K562 (cell line): ENCODE measurements at regions of chr7 and their contacts with region 1.

Region 1: GRCh38 chr7:100049441-100050311 is at the start of gene ZSCAN21:
- DNase-seq: peak; percentile 93 to 97 (median 96)
- ATAC-seq: peak; percentile 96
- H3K4me3 ChIP-seq: peak within 1 kb of the TSS; percentile 88
- H3K27ac ChIP-seq: peak within 1 kb of the TSS; percentile 77
- H3K4me1 ChIP-seq: peaks cover 3 to 14% of the 10 kb centered on the region in 2 experiments; a peak in 3 of 5 replicates
- H3K27me3 ChIP-seq: no peaks in the 10 kb centered on the region
- CTCF ChIP-seq: peak; percentile 28 to 41 (median 34); a peak in 5 of 6 replicates
- EP300 ChIP-seq: peak; percentile 46
- POLR2A ChIP-seq: peak; percentile 95
- RAD21 ChIP-seq: peak in 1 of 2 experiments; percentile 29; a peak in 1 of 4 replicates
- polyA plus RNA-seq, gene ZSCAN21: 5.9 to 6.9 TPM

Region 2: GRCh38 chr7:99910976-99911375 is 138.7 kb before region 1 on chr7:
- CTCF ChIA-PET with region 1: interaction called, 6 read pairs
- POLR2A ChIA-PET with region 1: interaction called, 3 read pairs
- in situ Hi-C with region 1: no loop called
- intact Hi-C with region 1: loop called (anchors 5 kb)
- DNase-seq: no peak
- ATAC-seq: no peak
- H3K4me3 ChIP-seq: no peak overlapping the region
- H3K27ac ChIP-seq: no peak overlapping the region
- H3K4me1 ChIP-seq: no peaks in the 10 kb centered on the region
- H3K27me3 ChIP-seq: no peaks in the 10 kb centered on the region
- CTCF ChIP-seq: no peak
- EP300 ChIP-seq: no peak
- POLR2A ChIP-seq: no peak
- RAD21 ChIP-seq: no peak

Region 3: DNA sequence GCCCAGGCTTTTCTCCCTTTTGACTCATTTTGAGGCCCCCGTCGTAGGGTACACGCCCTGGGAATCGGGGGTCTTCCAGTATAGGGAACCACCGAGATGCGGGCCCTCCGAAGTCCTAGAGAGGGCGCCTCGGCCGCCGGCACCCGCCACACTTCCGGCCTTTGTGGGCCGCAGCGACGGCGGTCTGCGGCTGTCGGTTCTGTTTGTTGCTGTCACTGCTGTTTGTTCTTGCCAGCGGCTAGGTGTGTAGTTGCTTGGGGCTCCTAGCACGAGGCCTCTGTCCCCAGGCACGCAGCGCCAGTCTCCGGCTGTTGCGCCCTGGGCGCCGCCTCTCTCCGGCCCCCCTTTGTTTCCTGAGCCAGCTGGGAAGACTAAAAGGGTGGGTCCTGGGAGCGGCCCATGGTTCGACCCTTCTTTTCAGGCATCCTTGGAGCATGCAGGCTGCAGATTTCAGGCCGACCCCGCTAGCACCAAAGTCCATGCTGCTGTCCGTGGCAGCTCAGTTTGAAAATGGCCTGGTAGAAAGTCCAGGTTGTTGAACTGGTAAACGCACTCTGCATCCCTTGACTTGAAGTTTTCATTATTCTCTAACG is 52.0 kb before region 1 on chr7:
- CTCF ChIA-PET with region 1: interaction called, 13 read pairs
- POLR2A ChIA-PET with region 1: no interaction called
- in situ Hi-C with region 1: no loop called
- intact Hi-C with region 1: loop called (anchors 2 kb)
- DNase-seq: no peak
- ATAC-seq: no peak
- H3K4me3 ChIP-seq: no peak overlapping the region
- H3K27ac ChIP-seq: no peak overlapping the region
- H3K4me1 ChIP-seq: peaks cover 2 to 13% of the 10 kb centered on the region in 2 experiments; a peak in 3 of 5 replicates
- H3K27me3 ChIP-seq: peaks cover 25 to 40% of the 10 kb centered on the region in 2 experiments; a peak in 4 of 5 replicates
- CTCF ChIP-seq: no peak
- EP300 ChIP-seq: no peak
- POLR2A ChIP-seq: no peak
- RAD21 ChIP-seq: no peak

Region 4: GRCh38 chr7:100008525-100008924 is 41.2 kb before region 1 on chr7:
- CTCF ChIA-PET with region 1: no interaction called
- POLR2A ChIA-PET with region 1: no interaction called
- in situ Hi-C with region 1: no loop called
- intact Hi-C with region 1: no loop called
- DNase-seq: no peak
- ATAC-seq: no peak
- H3K4me3 ChIP-seq: no peak overlapping the region
- H3K27ac ChIP-seq: no peak overlapping the region
- H3K4me1 ChIP-seq: peaks cover 5 to 7% of the 10 kb centered on the region in 2 experiments; a peak in 4 of 5 replicates
- H3K27me3 ChIP-seq: peaks cover 36 to 61% of the 10 kb centered on the region in 2 experiments
- CTCF ChIP-seq: no peak
- EP300 ChIP-seq: no peak
- POLR2A ChIP-seq: no peak
- RAD21 ChIP-seq: no peak

Region 5: DNA sequence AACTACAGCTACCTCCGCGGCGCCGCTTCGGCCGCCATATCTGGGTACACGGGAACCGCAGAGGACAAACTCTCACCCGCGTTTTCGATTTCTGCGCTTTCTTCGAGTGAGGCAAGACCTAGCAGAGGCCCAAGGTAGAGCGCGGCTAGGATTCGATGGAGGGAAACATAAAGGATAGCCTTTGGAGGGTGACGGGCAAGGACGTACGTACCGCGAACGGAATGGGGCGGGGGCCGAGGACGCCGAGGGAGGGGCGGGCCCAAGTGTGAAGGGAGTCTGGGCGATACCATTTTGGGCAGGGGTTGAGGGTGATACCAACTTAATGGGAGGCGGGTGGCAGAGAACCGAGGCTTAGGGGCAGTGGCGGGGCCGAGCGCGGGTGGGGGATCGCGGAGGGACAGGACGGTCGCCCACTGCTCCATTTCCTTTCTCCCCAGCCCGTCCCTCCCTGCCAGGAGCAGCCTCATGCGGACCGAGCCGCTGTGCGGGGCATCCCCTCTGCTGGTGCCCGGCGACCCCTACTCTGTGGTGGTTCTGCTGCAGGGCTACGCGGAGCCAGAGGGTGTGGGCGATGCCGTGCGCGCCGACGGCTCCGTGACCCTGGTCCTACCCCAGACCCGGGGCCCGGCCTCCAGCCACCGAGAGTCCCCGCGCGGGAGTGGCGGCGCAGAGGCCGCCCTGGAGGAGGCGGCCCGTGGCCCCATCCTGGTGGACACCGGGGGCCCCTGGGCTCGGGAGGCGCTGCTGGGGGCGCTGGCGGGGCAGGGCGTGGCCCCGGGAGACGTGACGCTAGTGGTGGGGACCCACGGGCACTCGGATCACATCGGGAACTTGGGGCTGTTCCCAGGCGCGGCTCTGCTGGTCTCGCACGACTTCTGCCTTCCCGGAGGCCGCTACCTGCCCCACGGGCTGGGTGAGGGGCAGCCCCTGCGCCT is 77.5 kb after region 1 on chr7 and contains the start of gene MBLAC1:
- CTCF ChIA-PET with region 1: no interaction called
- POLR2A ChIA-PET with region 1: interaction called, 3 read pairs
- in situ Hi-C with region 1: no loop called
- intact Hi-C with region 1: loop called (anchors 5 kb)
- DNase-seq: peak; percentile 90 to 96 (median 94)
- ATAC-seq: peak; percentile 70
- H3K4me3 ChIP-seq: peak within 1 kb of the TSS; percentile 74
- H3K27ac ChIP-seq: peak within 1 kb of the TSS; percentile 97
- H3K4me1 ChIP-seq: peaks cover 35 to 60% of the 10 kb centered on the region in 2 experiments
- H3K27me3 ChIP-seq: no peaks in the 10 kb centered on the region
- CTCF ChIP-seq: peak in 1 of 3 experiments; percentile 25; a peak in 1 of 6 replicates
- EP300 ChIP-seq: 0 out of 2 replicates have a peak, but pooled peaks have one; percentile 7
- POLR2A ChIP-seq: peak; percentile 92
- RAD21 ChIP-seq: no peak
- polyA plus RNA-seq, gene MBLAC1: 0.03 TPM